ENCODE measurements at regions of chr9 and their contacts with region 1.

Region 1: DNA sequence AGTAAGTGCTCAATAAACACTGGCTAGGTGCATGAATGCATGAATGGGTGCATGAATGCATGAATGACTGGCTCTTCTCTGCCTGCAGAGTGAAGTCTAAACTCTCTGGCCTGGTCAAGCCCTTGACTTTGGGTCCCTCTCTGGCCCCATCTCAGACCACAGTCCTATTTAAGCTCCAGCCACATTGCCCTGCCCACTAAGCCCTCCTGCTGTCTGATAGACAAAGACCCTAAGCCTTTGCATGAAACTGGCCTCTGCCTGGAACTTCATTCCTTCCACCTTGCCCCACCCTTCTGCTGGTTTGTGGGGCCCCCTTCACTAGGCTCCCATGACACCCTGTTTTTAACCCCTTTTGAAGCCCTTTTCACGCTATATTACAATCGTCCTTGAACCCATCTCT is 202.4 kb downstream of the TTLL11 start:
- DNase-seq: no peak

Region 2: GRCh38 chr9:121213136-121213806 is 677.5 kb before region 1 on chr9:
- intact Hi-C with region 1: no loop called
- DNase-seq: peak; percentile 96

Region 3: DNA sequence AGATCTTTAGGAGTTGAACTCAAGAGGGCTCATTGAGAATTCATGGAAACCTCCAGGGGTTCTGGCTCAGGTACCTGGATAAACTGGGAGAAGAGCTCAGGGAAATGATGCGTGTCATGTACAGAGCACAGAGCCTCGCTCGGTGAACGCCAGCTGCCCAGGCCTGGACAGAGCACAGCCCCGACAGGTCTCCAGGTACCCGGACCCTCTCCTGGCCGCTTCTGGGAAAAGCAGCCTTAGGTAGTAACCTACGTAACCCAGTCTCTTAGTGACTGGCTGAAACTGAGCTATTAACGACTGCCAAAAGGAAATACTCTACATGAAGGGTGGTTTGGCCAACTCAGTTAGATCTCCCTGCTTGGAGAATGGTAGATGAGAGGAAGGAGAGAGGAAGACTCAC is 45.0 kb after region 1 on chr9:
- intact Hi-C with region 1: loop called in 1 of 2 experiments (anchors 1 kb)
- DNase-seq: no peak

Measured in posterior vena cava (tissue), 2 donors.